ENCODE measurements at regions of chr19 and their contacts with region 1.

Region 1: DNA sequence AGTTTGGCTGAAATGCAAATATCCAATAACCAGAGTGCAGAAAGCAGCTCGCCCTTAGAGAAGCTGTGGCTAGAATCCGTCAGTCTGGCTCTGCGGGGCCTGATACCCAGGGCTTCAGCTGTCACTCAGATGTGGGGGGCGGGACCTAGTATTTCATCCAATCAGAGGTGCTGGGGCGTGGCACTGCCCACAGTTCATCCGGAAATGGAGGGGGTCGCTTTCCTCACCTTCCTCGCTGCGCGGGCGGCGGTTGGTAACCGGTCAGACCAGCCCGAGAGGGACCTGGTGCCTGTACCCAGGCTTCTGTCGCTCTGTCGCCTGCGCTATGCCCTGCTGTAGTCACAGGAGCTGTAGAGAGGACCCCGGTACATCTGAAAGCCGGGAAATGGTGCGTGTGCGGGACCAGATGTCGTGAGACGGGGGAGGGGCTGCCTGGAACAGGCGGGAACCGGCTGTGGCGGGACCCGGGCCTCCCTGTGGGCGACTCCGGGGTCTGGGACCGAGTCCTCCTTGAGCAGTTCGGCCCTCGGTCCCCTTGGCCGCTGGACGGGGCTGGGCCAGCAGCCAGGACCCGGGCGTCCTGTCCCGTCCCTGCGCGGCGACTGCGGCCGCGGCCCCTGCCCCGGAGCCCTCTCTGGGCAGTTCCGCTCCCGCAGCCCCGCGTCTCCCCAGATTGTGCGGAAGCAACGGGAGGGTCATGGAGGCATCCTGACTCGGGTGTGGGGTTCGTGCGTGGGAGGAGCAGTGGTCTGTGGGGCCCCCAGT is at the start of gene ZNF700:
- DNase-seq: peak; percentile 85 to 95
- ATAC-seq: peak; percentile 88 to 96 (median 91)
- H3K4me3 ChIP-seq: peak within 1 kb of the TSS; percentile 69
- H3K4me3 Mint-ChIP-seq: peak within 1 kb of the TSS; percentile 97
- H3K27ac ChIP-seq: peak within 1 kb of the TSS; percentile 84
- H3K27ac Mint-ChIP-seq: peak within 1 kb of the TSS; percentile 97 to 99
- H3K4me1 ChIP-seq: peaks cover 30% of the 10 kb centered on the region
- H3K4me1 Mint-ChIP-seq: peaks cover 50 to 54% of the 10 kb centered on the region in 2 donors
- H3K27me3 ChIP-seq: no peaks in the 10 kb centered on the region
- H3K27me3 Mint-ChIP-seq: peaks cover 0 to 4% of the 10 kb centered on the region in 2 donors
- CTCF ChIP-seq: no peak
- total RNA-seq, gene ZNF700: 25.1 to 30.1 (median 26.4) TPM

Region 2: GRCh38 chr19:11798391-11799330 is 126.4 kb before region 1 on chr19 and contains the start of gene ZNF491:
- intact Hi-C with region 1: loop called (anchors 5 kb)
- DNase-seq: peak; percentile 87
- ATAC-seq: peak; percentile 98 to 99 (median 98)
- H3K4me3 ChIP-seq: peak within 1 kb of the TSS; percentile 64
- H3K4me3 Mint-ChIP-seq: peak within 1 kb of the TSS; percentile 96
- H3K27ac ChIP-seq: peak within 1 kb of the TSS; percentile 60
- H3K27ac Mint-ChIP-seq: peak within 1 kb of the TSS; percentile 84 to 90
- H3K4me1 ChIP-seq: peaks cover 17% of the 10 kb centered on the region
- H3K4me1 Mint-ChIP-seq: peaks cover 16 to 22% of the 10 kb centered on the region in 2 donors
- H3K27me3 ChIP-seq: no peaks in the 10 kb centered on the region
- H3K27me3 Mint-ChIP-seq: no peaks in the 10 kb centered on the region
- CTCF ChIP-seq: peak; percentile 9
- total RNA-seq, gene ZNF491: 1.9 to 3.8 (median 3.7) TPM

Region 3: DNA sequence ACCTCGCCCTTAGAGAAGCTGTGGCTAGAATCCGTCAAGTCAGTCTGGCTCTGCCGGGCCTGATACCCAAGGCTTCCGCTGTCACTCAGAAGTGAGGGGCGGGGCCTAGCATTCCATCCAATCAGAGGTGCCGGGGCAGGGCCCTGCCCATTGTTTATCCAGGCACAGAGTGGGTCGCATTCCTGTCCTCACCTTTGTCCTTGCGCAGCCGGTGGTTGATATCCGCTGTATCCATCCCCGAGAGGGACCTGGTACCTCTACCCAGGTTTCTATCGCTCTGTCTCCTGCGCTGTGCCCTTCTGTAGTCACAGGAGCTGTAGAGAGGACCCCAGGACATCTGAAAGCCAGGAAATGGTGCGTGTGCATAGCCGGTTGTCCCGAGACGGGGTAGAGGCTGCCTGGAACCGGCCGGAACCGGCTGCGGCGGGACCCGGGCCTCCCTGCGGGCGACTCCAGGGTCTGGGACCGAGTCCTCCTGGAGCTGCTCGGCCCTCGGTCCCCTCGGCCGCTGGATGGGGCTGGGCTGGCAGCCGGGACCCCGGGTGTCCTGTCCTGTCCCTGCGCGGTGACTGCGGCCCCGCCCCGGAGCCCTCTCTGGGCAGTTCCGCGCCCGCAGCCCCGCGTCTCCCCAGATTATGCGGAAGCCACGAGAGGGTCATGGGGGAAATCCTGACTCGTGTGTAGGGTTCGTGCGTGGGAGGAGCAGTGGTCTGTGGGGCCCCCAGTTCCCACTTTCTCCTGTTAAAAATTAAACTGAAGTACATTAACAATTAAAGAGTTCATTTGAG is 40.0 kb after region 1 on chr19 and contains the start of gene ZNF763:
- intact Hi-C with region 1: loop called (anchors 1 kb)
- DNase-seq: peak; percentile 90 to 92
- ATAC-seq: peak; percentile 89 to 94 (median 90)
- H3K4me3 ChIP-seq: peak within 1 kb of the TSS; percentile 86
- H3K4me3 Mint-ChIP-seq: peak within 1 kb of the TSS; percentile 90
- H3K27ac ChIP-seq: peak within 1 kb of the TSS; percentile 91
- H3K27ac Mint-ChIP-seq: peak within 1 kb of the TSS; percentile 95
- H3K4me1 ChIP-seq: peaks cover 18% of the 10 kb centered on the region
- H3K4me1 Mint-ChIP-seq: peaks cover 22 to 28% of the 10 kb centered on the region in 2 donors
- H3K27me3 ChIP-seq: no peaks in the 10 kb centered on the region
- H3K27me3 Mint-ChIP-seq: no peaks in the 10 kb centered on the region
- CTCF ChIP-seq: no peak
- total RNA-seq, gene ZNF763: 4.8 to 7.7 (median 5.8) TPM

Region 4: GRCh38 chr19:12055783-12056182 is 130.7 kb after region 1 on chr19:
- intact Hi-C with region 1: loop called (anchors 5 kb)
- DNase-seq: no peak
- ATAC-seq: no peak
- H3K4me3 ChIP-seq: no peak overlapping the region
- H3K4me3 Mint-ChIP-seq: no peak overlapping the region
- H3K27ac ChIP-seq: no peak overlapping the region
- H3K27ac Mint-ChIP-seq: no peak overlapping the region
- H3K4me1 ChIP-seq: peaks cover 18% of the 10 kb centered on the region
- H3K4me1 Mint-ChIP-seq: peaks cover 12 to 18% of the 10 kb centered on the region in 2 donors
- H3K27me3 ChIP-seq: no peaks in the 10 kb centered on the region
- H3K27me3 Mint-ChIP-seq: peaks cover 7 to 11% of the 10 kb centered on the region in 2 donors
- CTCF ChIP-seq: no peak

Region 5: GRCh38 chr19:12346896-12347295 is 421.8 kb after region 1 on chr19:
- intact Hi-C with region 1: loop called (anchors 5 kb)
- DNase-seq: peak in 1 of 2 donors; percentile 70
- ATAC-seq: peak; percentile 48 to 67 (median 66)
- H3K4me3 ChIP-seq: no peak overlapping the region
- H3K4me3 Mint-ChIP-seq: no peak overlapping the region
- H3K27ac ChIP-seq: no peak overlapping the region
- H3K27ac Mint-ChIP-seq: no peak overlapping the region
- H3K4me1 ChIP-seq: no peaks in the 10 kb centered on the region
- H3K4me1 Mint-ChIP-seq: no peaks in the 10 kb centered on the region
- H3K27me3 ChIP-seq: no peaks in the 10 kb centered on the region
- H3K27me3 Mint-ChIP-seq: no peaks in the 10 kb centered on the region
- CTCF ChIP-seq: peak; percentile 29